ENCODE measurements at regions of chr3 and their contacts with region 1.

Region 1: DNA sequence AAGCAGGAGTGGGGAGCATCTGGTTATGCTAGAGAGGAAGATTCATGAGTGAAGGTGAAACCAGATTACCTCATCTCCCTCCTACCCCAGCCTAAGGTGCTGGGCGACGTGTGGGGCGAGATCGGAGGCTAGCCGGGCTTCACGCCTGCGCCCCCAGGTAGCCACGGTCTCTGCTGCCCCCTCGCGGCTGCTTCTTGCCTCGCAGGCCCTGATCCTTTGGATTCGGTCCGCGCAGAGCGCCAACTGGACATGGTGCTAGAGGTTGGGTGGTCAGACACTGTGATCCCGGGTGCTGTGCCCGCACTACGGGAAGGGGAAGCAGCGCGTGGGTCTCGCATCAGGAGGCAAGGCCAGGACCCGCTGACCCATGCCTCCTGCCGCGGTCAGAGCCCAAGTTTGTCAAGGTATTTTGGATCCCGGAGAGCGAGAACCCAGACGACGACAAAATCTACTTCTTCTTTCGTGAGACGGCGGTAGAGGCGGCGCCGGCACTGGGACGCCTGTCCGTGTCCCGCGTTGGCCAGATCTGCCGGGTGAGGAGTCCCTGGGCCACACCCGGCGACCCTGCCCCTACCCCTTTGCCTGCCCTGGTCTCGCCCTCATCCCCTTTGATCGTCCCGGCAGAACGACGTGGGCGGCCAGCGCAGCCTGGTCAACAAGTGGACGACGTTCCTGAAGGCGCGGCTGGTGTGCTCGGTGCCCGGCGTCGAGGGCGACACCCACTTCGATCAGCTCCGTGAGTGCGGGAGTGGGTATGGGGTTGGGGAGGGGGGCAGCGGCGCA is 4.2 kb downstream of the SEMA3B start:
- DNase-seq: peak; percentile 88 to 97
- ATAC-seq: peak; percentile 85
- H3K4me3 ChIP-seq: no peak overlapping the region
- H3K27ac ChIP-seq: no peak overlapping the region
- H3K4me1 ChIP-seq: no peaks in the 10 kb centered on the region
- H3K27me3 ChIP-seq: no peaks in the 10 kb centered on the region

Region 2: GRCh38 chr3:50121416-50122032 is 151.6 kb before region 1 on chr3:
- intact Hi-C with region 1: loop called in 1 of 2 experiments (anchors 10 kb)
- DNase-seq: peak; percentile 85 to 94
- ATAC-seq: peak; percentile 87
- H3K4me3 ChIP-seq: no peak overlapping the region
- H3K27ac ChIP-seq: no peak overlapping the region
- H3K4me1 ChIP-seq: no peaks in the 10 kb centered on the region
- H3K27me3 ChIP-seq: no peaks in the 10 kb centered on the region

Region 3: DNA sequence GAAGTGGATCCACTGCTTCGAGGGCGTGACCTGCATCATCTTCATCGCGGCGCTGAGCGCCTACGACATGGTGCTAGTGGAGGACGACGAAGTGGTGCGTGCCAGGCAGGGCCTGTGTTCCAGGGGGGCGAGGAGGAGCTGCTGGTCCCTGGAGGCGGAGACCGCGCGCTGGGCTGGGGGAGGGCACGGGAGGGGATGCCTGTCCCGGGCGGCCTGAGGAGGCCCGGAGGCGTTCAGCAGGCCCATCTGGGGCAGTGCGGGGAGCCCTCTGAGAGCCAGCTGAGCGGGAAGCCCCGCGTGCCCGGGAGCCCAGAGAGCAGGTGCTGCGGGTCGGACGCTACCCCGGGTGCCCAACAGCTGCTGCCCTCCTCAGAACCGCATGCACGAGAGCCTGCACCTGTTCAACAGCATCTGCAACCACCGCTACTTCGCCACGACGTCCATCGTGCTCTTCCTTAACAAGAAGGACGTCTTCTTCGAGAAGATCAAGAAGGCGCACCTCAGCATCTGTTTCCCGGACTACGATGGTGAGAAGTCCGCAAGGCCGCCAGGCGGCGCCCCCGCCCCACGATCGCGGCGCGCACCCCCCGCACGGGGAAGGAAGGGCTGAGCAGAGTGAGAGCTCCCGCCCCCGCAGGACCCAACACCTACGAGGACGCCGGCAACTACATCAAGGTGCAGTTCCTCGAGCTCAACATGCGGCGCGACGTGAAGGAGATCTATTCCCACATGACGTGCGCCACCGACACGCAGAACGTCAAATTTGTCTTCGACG is 78.8 kb before region 1 on chr3:
- intact Hi-C with region 1: loop called in 1 of 2 experiments (anchors 2 kb)
- DNase-seq: peak; percentile 67 to 92
- ATAC-seq: peak; percentile 71
- H3K4me3 ChIP-seq: no peak overlapping the region
- H3K27ac ChIP-seq: no peak overlapping the region
- H3K4me1 ChIP-seq: no peaks in the 10 kb centered on the region
- H3K27me3 ChIP-seq: no peaks in the 10 kb centered on the region

Region 4: DNA sequence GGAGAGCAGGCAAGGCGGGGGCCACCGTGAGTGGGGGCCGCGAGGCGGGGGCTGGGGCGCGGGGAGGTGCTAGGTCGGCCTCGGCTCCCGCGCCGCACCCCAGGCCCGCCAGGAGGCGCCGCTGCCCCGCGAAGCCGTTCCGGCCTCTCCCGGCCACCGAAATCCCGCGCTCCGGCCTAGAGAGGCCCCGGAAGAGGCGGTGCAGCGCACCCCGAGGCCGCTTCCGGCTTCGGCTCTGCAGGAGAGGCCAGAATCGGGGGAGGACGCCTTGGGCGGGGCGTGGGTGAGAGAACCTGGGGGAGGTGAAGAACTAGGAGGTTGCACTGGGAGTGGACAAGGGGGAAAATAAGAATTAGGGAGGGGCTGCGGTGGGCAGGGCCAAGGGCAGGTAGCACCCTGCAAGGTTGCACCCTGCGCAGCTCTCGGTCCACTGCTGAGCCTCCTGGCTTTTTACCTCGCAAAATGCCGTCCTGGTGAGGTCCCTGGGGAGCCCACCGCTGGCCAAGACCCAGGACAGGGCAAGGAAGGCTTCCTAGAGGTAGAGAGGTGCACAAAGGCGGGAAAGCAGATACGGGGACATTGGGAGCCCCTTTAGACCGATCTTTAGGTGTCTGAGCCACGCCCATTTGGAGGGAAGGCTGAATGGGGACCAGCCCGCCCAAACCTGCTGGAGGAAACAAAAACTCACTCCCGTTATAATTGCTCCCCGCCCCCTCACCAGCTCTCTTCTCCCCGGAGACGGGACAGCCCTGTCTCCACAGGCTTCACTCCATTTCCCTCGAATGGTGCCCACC is 45.5 kb before region 1 on chr3:
- intact Hi-C with region 1: loop called (anchors 1 to 2 kb)
- DNase-seq: peak; percentile 95 to 97
- ATAC-seq: peak; percentile 94
- H3K4me3 ChIP-seq: peak overlapping the region; percentile 19 to 56
- H3K27ac ChIP-seq: peak overlapping the region in 1 of 2 donors; percentile 28
- H3K4me1 ChIP-seq: no peaks in the 10 kb centered on the region
- H3K27me3 ChIP-seq: no peaks in the 10 kb centered on the region

Region 5: DNA sequence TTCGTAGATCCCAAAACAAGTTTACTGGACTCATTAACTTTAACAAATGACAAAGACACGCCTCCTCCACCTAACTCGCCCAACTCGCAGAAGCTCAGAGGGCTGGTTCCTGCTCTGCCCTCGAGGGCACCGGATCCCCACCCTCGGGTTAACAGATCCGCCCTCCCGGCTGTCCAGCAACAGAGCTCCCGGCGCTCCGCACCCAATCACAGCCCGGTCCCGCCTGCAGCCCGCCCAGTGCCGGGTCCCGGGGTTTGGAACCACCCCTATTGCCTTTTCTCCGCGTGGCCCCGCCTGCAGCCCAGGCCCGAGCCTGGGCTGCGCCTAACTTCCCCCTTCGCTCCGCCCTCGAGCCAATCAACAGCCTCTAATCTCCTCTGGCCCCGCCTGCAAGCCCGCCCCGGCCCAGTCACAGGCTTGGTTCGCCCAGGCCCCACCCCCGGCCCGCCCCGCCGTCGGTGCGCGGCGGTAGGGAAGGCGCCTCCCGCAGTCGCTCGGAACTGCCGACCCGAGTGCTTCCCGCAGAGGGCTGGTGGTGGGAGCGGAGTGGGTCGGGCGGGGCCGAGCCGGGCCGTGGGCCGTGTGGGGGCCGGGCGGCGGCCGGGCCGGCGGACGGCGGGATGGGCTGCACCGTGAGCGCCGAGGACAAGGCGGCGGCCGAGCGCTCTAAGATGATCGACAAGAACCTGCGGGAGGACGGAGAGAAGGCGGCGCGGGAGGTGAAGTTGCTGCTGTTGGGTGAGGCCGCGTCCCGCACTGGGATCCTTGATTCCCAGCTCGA is 37.2 kb before region 1 on chr3 and contains the start of gene GNAI2:
- intact Hi-C with region 1: loop called in 1 of 2 experiments (anchors 2 kb)
- DNase-seq: peak; percentile 99
- ATAC-seq: peak; percentile 96
- H3K4me3 ChIP-seq: peak within 1 kb of the TSS; percentile 93 to 95
- H3K27ac ChIP-seq: peak within 1 kb of the TSS; percentile 43 to 78
- H3K4me1 ChIP-seq: no peaks in the 10 kb centered on the region
- H3K27me3 ChIP-seq: no peaks in the 10 kb centered on the region
- total RNA-seq, gene GNAI2: 301 to 356 TPM

Region 6: DNA sequence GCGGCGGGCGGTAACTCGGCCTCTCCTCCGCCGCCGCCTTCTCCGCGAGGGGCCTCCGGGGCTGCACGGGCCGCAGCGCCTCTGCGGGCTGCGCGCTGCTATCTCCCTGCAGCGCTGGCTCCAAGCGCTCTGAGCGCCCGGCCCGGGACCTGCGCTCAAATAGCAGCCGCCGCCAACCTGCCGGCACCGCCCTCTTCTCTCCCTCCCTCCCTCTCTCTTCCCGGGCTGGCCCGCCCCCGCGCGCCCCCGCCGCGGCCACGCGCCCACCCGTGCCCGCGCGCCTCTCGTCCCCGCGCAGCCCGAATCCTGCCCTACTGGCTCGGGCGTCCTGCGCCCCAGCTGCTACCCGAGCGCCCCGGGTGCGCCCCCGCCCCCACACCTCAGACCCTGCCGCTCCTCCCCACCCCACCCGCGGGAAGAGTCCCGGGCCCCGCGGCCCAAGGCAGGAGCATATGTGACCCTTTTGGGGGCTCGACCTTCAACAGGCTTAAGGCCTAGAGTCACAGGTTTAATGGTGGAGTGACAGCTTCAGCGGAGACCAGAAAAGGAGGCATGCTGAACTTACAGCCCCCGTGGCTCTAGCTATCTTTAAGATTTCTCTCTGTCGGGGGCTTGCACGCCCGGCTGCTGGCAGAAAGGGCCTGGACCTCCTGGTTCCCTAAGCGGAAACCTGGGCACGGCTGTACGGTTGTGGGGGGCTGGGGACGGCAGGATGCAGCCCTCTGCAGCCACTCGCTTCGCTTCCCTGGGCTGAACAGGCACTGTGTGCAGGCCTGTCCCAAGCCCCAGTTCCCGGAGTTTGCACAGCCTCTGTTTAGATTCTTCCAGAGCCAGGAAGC is 230.6 kb after region 1 on chr3 and contains the start of gene CACNA2D2:
- intact Hi-C with region 1: no loop called
- DNase-seq: peak; percentile 68 to 89
- ATAC-seq: peak; percentile 76
- H3K4me3 ChIP-seq: peak within 1 kb of the TSS; percentile 24 to 58
- H3K27ac ChIP-seq: no peak within 1 kb of the TSS
- H3K4me1 ChIP-seq: no peaks in the 10 kb centered on the region
- H3K27me3 ChIP-seq: no peaks in the 10 kb centered on the region
- total RNA-seq, gene CACNA2D2: 2.7 to 3.2 TPM

Measured in aorta (tissue), 5 donors.